Naive thymus-derived CD4-positive, alpha-beta T cell (primary cell): ENCODE measurements at regions of chr3 and their contacts with region 1.

Region 1: GRCh38 chr3:129120254-129121004 is 1.2 kb downstream of the RAB43 start:
- DNase-seq: peak; percentile 63 to 96 (median 93)
- ATAC-seq: peak; percentile 72
- H3K4me3 ChIP-seq: peak overlapping the region; percentile 95
- H3K4me3 Mint-ChIP-seq: peak overlapping the region; percentile 86 to 99 (median 98)
- H3K27ac ChIP-seq: peak overlapping the region; percentile 83
- H3K27ac Mint-ChIP-seq: peak overlapping the region; percentile 91 to 100 (median 97)
- H3K4me1 ChIP-seq: peaks cover 32 to 33% of the 10 kb centered on the region in 2 donors
- H3K4me1 Mint-ChIP-seq: peaks cover 26 to 58% (median 42%) of the 10 kb centered on the region in 7 donors
- H3K27me3 ChIP-seq: no peaks in the 10 kb centered on the region
- H3K27me3 Mint-ChIP-seq: no peaks in the 10 kb centered on the region

Region 2: DNA sequence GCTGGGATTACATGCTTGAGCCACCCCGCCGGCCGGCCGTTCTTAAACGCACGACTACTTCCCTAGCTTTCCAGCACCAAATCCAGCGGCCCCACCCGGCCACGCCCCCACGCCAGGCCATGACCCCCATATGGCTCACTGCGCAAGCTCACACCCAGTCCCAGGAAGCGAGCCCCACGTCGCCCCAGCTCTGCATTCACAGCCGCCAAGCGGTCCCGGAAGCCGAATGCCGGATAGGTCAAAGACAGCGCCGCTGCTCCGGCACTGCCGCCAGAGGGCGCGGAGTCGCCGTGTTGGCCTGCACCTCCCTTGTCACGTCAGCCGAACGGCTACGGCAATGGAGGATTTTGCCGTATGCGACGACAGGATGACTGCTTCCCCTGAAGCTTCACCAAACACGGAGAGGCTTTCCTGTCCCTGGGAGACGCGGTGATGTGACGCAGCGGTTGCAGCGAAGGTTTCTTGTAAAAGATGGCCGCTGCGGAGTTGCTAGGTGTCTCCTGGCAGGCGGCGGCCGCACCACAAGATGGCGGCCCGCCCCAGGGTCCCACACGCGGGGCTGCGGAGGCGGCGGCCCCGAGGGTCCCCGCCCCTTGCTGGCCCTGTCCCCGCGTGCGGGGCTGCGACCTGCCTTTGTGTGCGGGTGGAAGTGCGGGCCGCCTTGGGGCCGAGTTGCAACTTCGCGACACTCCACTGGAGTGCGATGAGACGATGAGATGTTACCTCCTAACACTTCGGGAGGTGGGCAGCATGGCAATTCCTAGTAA is 439.6 kb before region 1 on chr3:
- CTCF ChIA-PET with region 1: interaction called, 4 read pairs
- POLR2A ChIA-PET with region 1: interaction called, 5 read pairs
- intact Hi-C with region 1: loop called in 1 of 2 experiments (anchors 1 kb)
- DNase-seq: peak; percentile 94 to 98 (median 95)
- ATAC-seq: peak; percentile 95
- H3K4me3 ChIP-seq: peak overlapping the region; percentile 91
- H3K4me3 Mint-ChIP-seq: peak overlapping the region; percentile 84 to 98 (median 94)
- H3K27ac ChIP-seq: peak overlapping the region; percentile 92
- H3K27ac Mint-ChIP-seq: peak overlapping the region; percentile 95 to 100 (median 99)
- H3K4me1 ChIP-seq: peaks cover 11 to 14% of the 10 kb centered on the region in 2 donors
- H3K4me1 Mint-ChIP-seq: peaks cover 17 to 50% (median 38%) of the 10 kb centered on the region in 7 donors
- H3K27me3 ChIP-seq: no peaks in the 10 kb centered on the region
- H3K27me3 Mint-ChIP-seq: no peaks in the 10 kb centered on the region

Region 3: GRCh38 chr3:128794067-128794768 is 326.2 kb before region 1 on chr3:
- CTCF ChIA-PET with region 1: no interaction called
- POLR2A ChIA-PET with region 1: no interaction called
- intact Hi-C with region 1: no loop called
- DNase-seq: peak in 1 of 9 donors; percentile 26
- ATAC-seq: peak; percentile 44
- H3K4me3 ChIP-seq: no peak overlapping the region
- H3K4me3 Mint-ChIP-seq: peak overlapping the region in 9 of 10 donors; percentile 4 to 78 (median 53)
- H3K27ac ChIP-seq: peak overlapping the region; percentile 54
- H3K27ac Mint-ChIP-seq: peak overlapping the region; percentile 71 to 96 (median 85)
- H3K4me1 ChIP-seq: peaks cover 18 to 54% of the 10 kb centered on the region in 2 donors
- H3K4me1 Mint-ChIP-seq: peaks cover 25 to 71% (median 62%) of the 10 kb centered on the region in 7 donors
- H3K27me3 ChIP-seq: no peaks in the 10 kb centered on the region
- H3K27me3 Mint-ChIP-seq: no peaks in the 10 kb centered on the region

Region 4: GRCh38 chr3:128969993-128970739 is 150.3 kb before region 1 on chr3:
- CTCF ChIA-PET with region 1: interaction called, 9 read pairs
- POLR2A ChIA-PET with region 1: interaction called, 12 read pairs
- intact Hi-C with region 1: no loop called
- DNase-seq: peak; percentile 43 to 75 (median 64)
- ATAC-seq: peak; percentile 89
- H3K4me3 ChIP-seq: no peak overlapping the region
- H3K4me3 Mint-ChIP-seq: peak overlapping the region in 1 of 10 donors; percentile 11
- H3K27ac ChIP-seq: no peak overlapping the region
- H3K27ac Mint-ChIP-seq: no peak overlapping the region
- H3K4me1 ChIP-seq: no peaks in the 10 kb centered on the region
- H3K4me1 Mint-ChIP-seq: peaks cover 0 to 7% (median 6%) of the 10 kb centered on the region in 7 donors
- H3K27me3 ChIP-seq: no peaks in the 10 kb centered on the region
- H3K27me3 Mint-ChIP-seq: peaks cover 0 to 5% (median 0%) of the 10 kb centered on the region in 5 donors

Region 5: DNA sequence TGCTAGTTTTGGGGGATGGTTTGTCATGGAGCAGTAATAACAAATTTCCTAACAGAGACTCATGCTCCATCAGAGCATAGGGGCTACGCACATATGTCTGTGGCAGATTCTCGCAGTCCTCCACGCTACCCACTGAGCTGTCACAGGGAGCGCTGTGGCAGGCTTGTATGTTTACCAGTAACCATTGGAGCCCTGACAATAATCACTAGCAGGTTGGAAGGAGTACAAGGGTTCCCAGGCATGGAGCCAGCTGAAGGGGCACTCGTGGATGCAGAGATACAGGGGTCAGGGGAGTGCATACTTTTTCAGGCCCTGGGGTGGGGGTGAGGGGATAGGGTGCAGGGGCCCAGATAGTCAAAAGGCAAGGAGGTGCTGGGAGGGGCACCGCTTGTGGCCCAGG is 67.8 kb before region 1 on chr3:
- CTCF ChIA-PET with region 1: interaction called, 47 read pairs
- POLR2A ChIA-PET with region 1: interaction called, 70 read pairs
- intact Hi-C with region 1: loop called (anchors 1 kb)
- DNase-seq: no peak
- ATAC-seq: no peak
- H3K4me3 ChIP-seq: no peak overlapping the region
- H3K4me3 Mint-ChIP-seq: no peak overlapping the region
- H3K27ac ChIP-seq: no peak overlapping the region
- H3K27ac Mint-ChIP-seq: peak overlapping the region in 3 of 9 donors; percentile 38 to 69 (median 38)
- H3K4me1 ChIP-seq: no peaks in the 10 kb centered on the region
- H3K4me1 Mint-ChIP-seq: peaks cover 3 to 20% (median 9%) of the 10 kb centered on the region in 7 donors
- H3K27me3 ChIP-seq: no peaks in the 10 kb centered on the region
- H3K27me3 Mint-ChIP-seq: peaks cover 0 to 14% (median 0%) of the 10 kb centered on the region in 5 donors

Region 6: GRCh38 chr3:129106331-129106730 is 14.1 kb before region 1 on chr3:
- CTCF ChIA-PET with region 1: interaction called, 4 read pairs
- POLR2A ChIA-PET with region 1: interaction called, 111 read pairs
- intact Hi-C with region 1: loop called (anchors 1 to 2 kb)
- DNase-seq: no peak
- ATAC-seq: no peak
- H3K4me3 ChIP-seq: no peak overlapping the region
- H3K4me3 Mint-ChIP-seq: peak overlapping the region in 8 of 10 donors; percentile 29 to 84 (median 57)
- H3K27ac ChIP-seq: peak overlapping the region; percentile 46
- H3K27ac Mint-ChIP-seq: peak overlapping the region in 6 of 9 donors; percentile 65 to 89 (median 82)
- H3K4me1 ChIP-seq: peaks cover 3 to 78% of the 10 kb centered on the region in 2 donors
- H3K4me1 Mint-ChIP-seq: peaks cover 62 to 95% (median 81%) of the 10 kb centered on the region in 7 donors
- H3K27me3 ChIP-seq: no peaks in the 10 kb centered on the region
- H3K27me3 Mint-ChIP-seq: no peaks in the 10 kb centered on the region

Region 7: DNA sequence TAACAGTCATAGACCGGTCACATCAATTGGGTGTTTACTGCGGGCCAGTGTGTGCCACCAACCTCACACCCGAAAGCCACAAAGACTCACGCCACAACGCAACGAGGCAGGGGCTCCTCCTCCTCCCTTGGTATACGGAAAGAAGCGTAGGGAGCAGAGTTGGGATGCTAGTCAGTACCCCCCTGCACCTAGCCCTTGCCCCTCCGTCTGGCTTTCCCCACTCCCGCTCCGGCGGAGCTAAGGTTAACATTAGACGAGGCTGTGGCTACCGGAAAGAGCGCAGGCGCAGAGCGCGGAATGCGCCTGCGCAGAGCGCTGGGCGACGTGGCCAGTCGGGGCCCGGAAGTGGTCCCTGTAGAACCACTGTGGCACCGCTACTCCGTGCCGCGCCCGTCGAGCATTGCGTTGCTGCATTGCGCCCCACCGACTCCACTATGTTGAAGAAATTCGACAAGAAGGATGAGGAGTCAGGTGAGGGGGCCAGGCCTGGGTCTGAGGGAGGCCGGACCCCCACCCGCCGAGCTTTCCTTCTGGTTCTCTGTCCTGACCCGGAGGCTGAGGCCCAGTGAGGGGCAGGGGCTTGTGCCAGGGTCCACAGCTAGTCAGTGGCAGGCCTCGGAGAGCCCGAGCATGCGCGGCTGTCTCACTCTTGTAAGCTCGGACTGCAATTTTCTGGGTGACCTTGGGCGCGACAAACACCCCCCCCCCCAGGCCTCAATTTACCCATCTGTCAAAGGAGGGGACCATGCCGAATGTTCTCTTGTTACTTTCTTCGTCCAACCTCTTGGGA is 129.0 kb after region 1 on chr3 and contains the start of gene COPG1:
- CTCF ChIA-PET with region 1: interaction called, 4 read pairs
- POLR2A ChIA-PET with region 1: interaction called, 11 read pairs
- intact Hi-C with region 1: loop called (anchors 1 kb)
- DNase-seq: peak; percentile 78 to 93 (median 89)
- ATAC-seq: peak; percentile 91
- H3K4me3 ChIP-seq: peak within 1 kb of the TSS; percentile 73
- H3K4me3 Mint-ChIP-seq: peak within 1 kb of the TSS; percentile 89 to 99 (median 95)
- H3K27ac ChIP-seq: peak within 1 kb of the TSS; percentile 98
- H3K27ac Mint-ChIP-seq: peak within 1 kb of the TSS; percentile 91 to 99 (median 96)
- H3K4me1 ChIP-seq: peaks cover 21 to 22% of the 10 kb centered on the region in 2 donors
- H3K4me1 Mint-ChIP-seq: peaks cover 29 to 65% (median 53%) of the 10 kb centered on the region in 7 donors
- H3K27me3 ChIP-seq: no peaks in the 10 kb centered on the region
- H3K27me3 Mint-ChIP-seq: peaks cover 0 to 4% (median 0%) of the 10 kb centered on the region in 5 donors
- total RNA-seq, gene COPG1: 83.3 to 177 (median 103) TPM

Region 8: DNA sequence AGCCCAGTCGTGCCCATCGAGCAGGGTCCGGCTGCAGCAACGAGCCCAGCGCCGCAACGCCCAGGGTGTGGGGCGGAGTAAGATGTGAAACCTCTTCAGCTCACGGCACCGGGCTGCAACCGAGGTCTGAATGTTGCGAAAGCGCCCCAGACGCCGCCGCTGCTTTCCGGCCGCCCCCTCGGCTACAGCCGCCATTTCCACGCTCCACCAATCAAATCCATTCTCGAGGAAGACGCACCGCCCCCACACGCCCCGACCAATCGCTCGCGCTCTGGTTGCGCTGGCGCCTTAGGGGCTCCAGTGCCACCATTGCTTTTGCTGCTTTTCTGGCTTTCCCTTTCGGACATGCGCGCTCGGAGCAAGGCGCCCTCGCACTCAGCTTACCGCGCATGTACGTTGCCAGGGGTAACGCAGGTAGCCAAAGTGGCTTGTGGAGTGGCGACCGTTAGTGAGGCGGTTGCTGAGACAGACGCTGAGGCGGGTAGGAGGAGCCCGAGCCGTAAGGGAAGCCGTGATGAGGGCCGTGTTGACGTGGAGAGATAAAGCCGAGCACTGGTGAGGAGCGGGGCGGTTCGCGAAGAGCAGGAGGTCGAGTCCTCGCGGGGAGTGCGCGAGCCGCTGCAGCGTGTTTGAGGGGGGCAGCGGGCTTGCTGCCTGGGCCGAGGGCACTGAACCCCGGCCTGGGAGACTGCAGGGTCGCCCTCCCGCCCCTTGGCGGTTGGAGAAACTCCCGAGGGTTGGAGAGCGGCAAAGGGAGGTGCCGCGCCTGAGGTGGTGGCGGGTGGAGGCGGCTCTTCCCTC is 319.6 kb after region 1 on chr3 and contains the starts of genes IFT122 and MBD4:
- CTCF ChIA-PET with region 1: no interaction called
- POLR2A ChIA-PET with region 1: no interaction called
- intact Hi-C with region 1: loop called (anchors 2 to 5 kb)
- DNase-seq: peak; percentile 95 to 100 (median 99)
- ATAC-seq: peak; percentile 91
- H3K4me3 ChIP-seq: peak within 1 kb of the TSS; percentile 99
- H3K4me3 Mint-ChIP-seq: peak within 1 kb of the TSS; percentile 85 to 98 (median 94)
- H3K27ac ChIP-seq: peak within 1 kb of the TSS; percentile 95
- H3K27ac Mint-ChIP-seq: peak within 1 kb of the TSS; percentile 93 to 99 (median 97)
- H3K4me1 ChIP-seq: peaks cover 19 to 38% of the 10 kb centered on the region in 2 donors
- H3K4me1 Mint-ChIP-seq: peaks cover 52 to 88% (median 73%) of the 10 kb centered on the region in 7 donors
- H3K27me3 ChIP-seq: no peaks in the 10 kb centered on the region
- H3K27me3 Mint-ChIP-seq: no peaks in the 10 kb centered on the region
- total RNA-seq, gene IFT122: 16.6 to 25.2 (median 18.8) TPM
- total RNA-seq, gene MBD4: 37.9 to 56.6 (median 53.1) TPM